GM23248 (cell line): ENCODE measurements at regions of chr10 and their contacts with region 1.

Region 1: DNA sequence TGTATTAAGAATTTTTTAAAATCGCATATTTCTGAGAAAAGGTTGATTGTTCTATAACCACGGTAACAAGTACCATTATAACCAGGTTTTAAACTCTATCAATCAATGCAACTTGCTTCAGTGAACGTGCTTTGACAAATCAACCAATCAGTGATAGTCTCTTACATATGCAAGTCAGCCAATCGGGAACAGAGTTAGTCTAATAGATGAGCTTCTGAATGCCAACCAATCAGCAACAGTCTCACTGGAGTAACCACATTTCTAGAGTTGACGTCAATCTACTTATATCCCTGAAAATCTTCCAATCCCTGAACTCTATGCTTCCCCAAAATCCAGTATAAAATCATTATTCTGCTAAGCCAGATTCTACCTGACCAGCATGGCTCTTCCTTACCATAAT is 44.7 kb upstream of the TRUB1 start:
- DNase-seq: no peak
- H3K4me3 ChIP-seq: no peak overlapping the region
- H3K27ac ChIP-seq: no peak overlapping the region
- H3K4me1 ChIP-seq: no peaks in the 10 kb centered on the region
- H3K27me3 ChIP-seq: no peaks in the 10 kb centered on the region; the same call in 1 of the 2 replicates

Region 2: GRCh38 chr10:114577133-114577532 is 316.1 kb before region 1 on chr10:
- in situ Hi-C with region 1: no loop called
- DNase-seq: peak; percentile 85
- H3K4me3 ChIP-seq: no peak overlapping the region
- H3K27ac ChIP-seq: no peak overlapping the region
- H3K4me1 ChIP-seq: peaks cover 9% of the 10 kb centered on the region
- H3K27me3 ChIP-seq: no peaks in the 10 kb centered on the region; the same call in none of the 2 replicates

Region 3: DNA sequence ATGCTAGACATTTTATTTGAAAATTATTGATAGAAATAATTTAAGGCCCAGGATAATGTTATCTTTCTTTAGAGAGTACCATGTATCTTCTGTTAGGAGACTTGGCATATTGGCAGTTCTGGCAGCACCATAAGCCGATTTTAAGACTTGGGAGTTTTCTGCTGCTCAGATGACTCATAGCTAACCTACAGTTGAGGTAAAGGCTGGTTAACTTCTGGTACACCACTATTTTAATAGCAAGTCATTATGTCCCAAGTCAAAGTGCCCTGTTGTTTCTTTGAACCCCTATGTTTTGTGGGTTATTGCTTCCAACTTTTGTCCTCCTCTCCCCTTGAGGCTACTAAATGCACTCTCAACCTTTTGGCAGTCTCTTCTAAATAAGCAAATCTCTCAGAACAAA is 225.1 kb after region 1 on chr10:
- in situ Hi-C with region 1: loop called (anchors 10 kb)
- DNase-seq: no peak
- H3K4me3 ChIP-seq: no peak overlapping the region
- H3K27ac ChIP-seq: no peak overlapping the region
- H3K4me1 ChIP-seq: no peaks in the 10 kb centered on the region
- H3K27me3 ChIP-seq: 0 out of 2 replicates have a peak, but pooled peaks cover 3% of the 10 kb centered on the region